GM12878 (cell line): ENCODE measurements at regions of chr5 and their contacts with region 1.

Region 1: GRCh38 chr5:42767491-42768105 is 11.0 kb downstream of the CCDC152 start:
- DNase-seq: no peak
- ATAC-seq: peak; percentile 53
- H3K4me3 ChIP-seq: no peak overlapping the region
- H3K27ac ChIP-seq: no peak overlapping the region
- H3K4me1 ChIP-seq: no peaks in the 10 kb centered on the region
- H3K27me3 ChIP-seq: no peaks in the 10 kb centered on the region
- CTCF ChIP-seq: peak; percentile 31 to 56 (median 42); a peak in 4 of 6 replicates
- EP300 ChIP-seq: no peak
- POLR2A ChIP-seq: no peak
- RAD21 ChIP-seq: peak; percentile 70

Region 2: DNA sequence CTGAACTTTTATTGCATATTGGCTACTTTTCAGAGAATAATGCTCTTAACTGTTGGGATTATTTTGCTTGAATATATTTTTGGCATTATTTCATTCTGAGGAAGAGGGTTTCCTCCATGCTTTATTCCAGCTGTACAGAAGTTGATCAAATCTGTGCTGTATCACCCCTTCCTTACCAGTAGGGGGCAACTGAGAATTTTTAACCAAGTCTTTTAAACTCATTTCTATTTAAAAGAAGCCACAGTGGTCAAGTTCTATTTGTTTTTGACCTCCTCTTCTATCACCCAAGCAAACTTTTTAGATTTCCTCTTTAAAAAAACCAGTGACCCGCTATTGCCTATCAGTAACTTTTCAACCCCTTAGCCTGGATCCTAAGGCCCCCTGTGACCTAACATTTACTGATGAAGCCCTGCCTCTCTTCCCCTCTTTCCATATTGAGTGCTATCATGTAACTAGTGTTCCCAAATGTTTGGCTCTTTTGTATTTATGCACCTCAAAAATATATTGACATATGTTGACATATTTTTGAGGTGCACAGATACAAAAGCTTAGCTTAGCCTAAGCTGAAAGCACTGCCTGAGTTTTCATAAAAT is 761.9 kb before region 1 on chr5:
- CTCF ChIA-PET with region 1: interaction called, 14 read pairs
- POLR2A ChIA-PET with region 1: no interaction called
- RAD21 ChIA-PET with region 1: interaction called, 4 read pairs
- SMC1A ChIA-PET with region 1: interaction called, 9 read pairs
- in situ Hi-C with region 1: no loop called
- intact Hi-C with region 1: loop called (anchors 5 kb)
- DNase-seq: no peak
- ATAC-seq: peak; percentile 79
- H3K4me3 ChIP-seq: no peak overlapping the region
- H3K27ac ChIP-seq: no peak overlapping the region
- H3K4me1 ChIP-seq: no peaks in the 10 kb centered on the region
- H3K27me3 ChIP-seq: no peaks in the 10 kb centered on the region
- CTCF ChIP-seq: peak; percentile 48 to 72 (median 66)
- EP300 ChIP-seq: no peak
- POLR2A ChIP-seq: no peak
- RAD21 ChIP-seq: peak; percentile 55

Region 3: GRCh38 chr5:42745426-42745825 is 22.2 kb before region 1 on chr5:
- CTCF ChIA-PET with region 1: interaction called, 19 read pairs
- POLR2A ChIA-PET with region 1: no interaction called
- RAD21 ChIA-PET with region 1: interaction called, 4 read pairs
- SMC1A ChIA-PET with region 1: interaction called, 3 read pairs
- in situ Hi-C with region 1: no loop called
- intact Hi-C with region 1: no loop called
- DNase-seq: no peak
- ATAC-seq: no peak
- H3K4me3 ChIP-seq: no peak overlapping the region
- H3K27ac ChIP-seq: no peak overlapping the region
- H3K4me1 ChIP-seq: no peaks in the 10 kb centered on the region
- H3K27me3 ChIP-seq: no peaks in the 10 kb centered on the region
- CTCF ChIP-seq: peak; percentile 7 to 35 (median 25); a peak in 2 of 6 replicates
- EP300 ChIP-seq: no peak
- POLR2A ChIP-seq: no peak
- RAD21 ChIP-seq: 0 out of 2 replicates have a peak, but pooled peaks have one; percentile 22

Region 4: GRCh38 chr5:42751044-42751443 is 16.6 kb before region 1 on chr5:
- CTCF ChIA-PET with region 1: interaction called, 19 read pairs
- POLR2A ChIA-PET with region 1: no interaction called
- RAD21 ChIA-PET with region 1: interaction called, 4 read pairs
- SMC1A ChIA-PET with region 1: interaction called, 9 read pairs
- in situ Hi-C with region 1: no loop called
- intact Hi-C with region 1: no loop called
- DNase-seq: no peak
- ATAC-seq: no peak
- H3K4me3 ChIP-seq: no peak overlapping the region
- H3K27ac ChIP-seq: no peak overlapping the region
- H3K4me1 ChIP-seq: no peaks in the 10 kb centered on the region
- H3K27me3 ChIP-seq: no peaks in the 10 kb centered on the region
- CTCF ChIP-seq: no peak
- EP300 ChIP-seq: no peak
- POLR2A ChIP-seq: no peak
- RAD21 ChIP-seq: no peak